PC-9 (cell line): ENCODE measurements at regions of chr2 and their contacts with region 1.

Region 1: DNA sequence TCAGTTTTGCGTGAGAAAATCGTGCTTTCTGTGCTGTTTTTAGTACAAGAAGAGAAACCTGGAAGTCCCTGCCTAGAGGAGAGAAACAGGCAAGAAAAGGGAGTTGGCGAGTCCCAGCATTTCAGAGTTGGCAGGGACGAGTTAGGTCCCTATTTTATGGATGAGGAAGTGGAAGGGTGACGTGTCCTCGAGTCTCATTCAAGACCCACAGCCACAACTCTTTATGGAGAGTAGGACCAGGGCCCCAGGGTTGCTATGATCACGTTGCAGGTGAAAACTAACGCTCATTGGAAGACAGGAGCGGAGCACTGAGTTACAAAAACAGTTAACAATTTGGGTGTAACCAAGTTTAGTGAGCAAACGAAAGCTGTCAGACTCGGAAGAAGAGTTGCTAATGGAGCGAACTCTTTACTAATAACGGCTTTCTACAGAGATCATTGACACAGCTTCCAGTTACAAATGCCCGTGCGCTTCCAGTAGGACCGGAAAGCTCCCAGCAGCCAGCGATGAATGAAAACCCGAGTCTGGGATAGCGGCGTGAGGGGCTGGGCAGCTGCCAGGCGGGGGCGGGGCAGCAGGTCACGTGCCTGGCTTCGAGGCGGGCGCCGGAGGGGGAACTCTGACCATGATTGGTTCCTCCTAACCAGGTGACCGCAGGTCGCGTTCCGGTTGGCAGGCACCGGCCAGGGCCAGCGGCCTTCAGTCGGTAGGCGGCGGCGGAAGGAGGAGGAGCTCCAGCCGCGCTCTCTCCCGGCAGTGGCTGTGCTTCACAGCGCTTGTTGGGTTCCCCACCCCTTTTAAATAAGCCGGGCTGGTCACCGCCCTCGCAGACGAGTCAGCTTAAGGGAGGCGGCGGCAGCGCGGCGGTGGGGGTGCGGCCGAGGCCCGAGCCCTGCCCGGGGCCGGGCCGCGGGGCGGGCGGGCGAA is at the start of gene CCNYL1:
- DNase-seq: peak; percentile 94 to 97
- H3K4me3 ChIP-seq: peak within 1 kb of the TSS; percentile 99
- H3K27ac ChIP-seq: peak within 1 kb of the TSS; percentile 97
- H3K4me1 ChIP-seq: peaks cover 27% of the 10 kb centered on the region
- H3K27me3 ChIP-seq: no peaks in the 10 kb centered on the region
- CTCF ChIP-seq: no peak
- total RNA-seq, gene CCNYL1: 21.8 and 24.8 TPM in 2 replicates

Region 2: GRCh38 chr2:207619764-207620203 is 91.3 kb before region 1 on chr2:
- CTCF ChIA-PET with region 1: no interaction called
- POLR2A ChIA-PET with region 1: interaction called, 16 read pairs
- intact Hi-C with region 1: no loop called
- DNase-seq: no peak
- H3K4me3 ChIP-seq: no peak overlapping the region
- H3K27ac ChIP-seq: no peak overlapping the region
- H3K4me1 ChIP-seq: peaks cover 29% of the 10 kb centered on the region
- H3K27me3 ChIP-seq: no peaks in the 10 kb centered on the region
- CTCF ChIP-seq: no peak

Region 3: GRCh38 chr2:207683879-207684627 is 27.0 kb before region 1 on chr2:
- CTCF ChIA-PET with region 1: no interaction called
- POLR2A ChIA-PET with region 1: interaction called, 10 read pairs
- intact Hi-C with region 1: loop called (anchors 2 kb)
- DNase-seq: peak; percentile 15 to 96
- H3K4me3 ChIP-seq: peak overlapping the region; percentile 10; the same call in 1 of the 2 replicates
- H3K27ac ChIP-seq: peak overlapping the region; percentile 92
- H3K4me1 ChIP-seq: peaks cover 35% of the 10 kb centered on the region
- H3K27me3 ChIP-seq: no peaks in the 10 kb centered on the region
- CTCF ChIP-seq: no peak